ENCODE measurements at regions of chr9 and their contacts with region 1.

Region 1: GRCh38 chr9:37592108-37592951 is at the start of gene TOMM5:
- DNase-seq: peak; percentile 73 to 96 (median 91)
- ATAC-seq: peak; percentile 95
- H3K4me3 ChIP-seq: peak within 1 kb of the TSS; percentile 96 to 98
- H3K4me3 Mint-ChIP-seq: peak within 1 kb of the TSS; percentile 99
- H3K27ac ChIP-seq: peak within 1 kb of the TSS; percentile 79 to 80
- H3K27ac Mint-ChIP-seq: peak within 1 kb of the TSS; percentile 93
- H3K4me1 ChIP-seq: peaks cover 18% of the 10 kb centered on the region
- H3K4me1 Mint-ChIP-seq: peaks cover 48% of the 10 kb centered on the region
- H3K27me3 ChIP-seq: no peaks in the 10 kb centered on the region
- H3K27me3 Mint-ChIP-seq: peaks cover 4% of the 10 kb centered on the region
- CTCF ChIP-seq: no peak
- total RNA-seq, gene TOMM5: 37.8 to 40.1 TPM

Region 2: DNA sequence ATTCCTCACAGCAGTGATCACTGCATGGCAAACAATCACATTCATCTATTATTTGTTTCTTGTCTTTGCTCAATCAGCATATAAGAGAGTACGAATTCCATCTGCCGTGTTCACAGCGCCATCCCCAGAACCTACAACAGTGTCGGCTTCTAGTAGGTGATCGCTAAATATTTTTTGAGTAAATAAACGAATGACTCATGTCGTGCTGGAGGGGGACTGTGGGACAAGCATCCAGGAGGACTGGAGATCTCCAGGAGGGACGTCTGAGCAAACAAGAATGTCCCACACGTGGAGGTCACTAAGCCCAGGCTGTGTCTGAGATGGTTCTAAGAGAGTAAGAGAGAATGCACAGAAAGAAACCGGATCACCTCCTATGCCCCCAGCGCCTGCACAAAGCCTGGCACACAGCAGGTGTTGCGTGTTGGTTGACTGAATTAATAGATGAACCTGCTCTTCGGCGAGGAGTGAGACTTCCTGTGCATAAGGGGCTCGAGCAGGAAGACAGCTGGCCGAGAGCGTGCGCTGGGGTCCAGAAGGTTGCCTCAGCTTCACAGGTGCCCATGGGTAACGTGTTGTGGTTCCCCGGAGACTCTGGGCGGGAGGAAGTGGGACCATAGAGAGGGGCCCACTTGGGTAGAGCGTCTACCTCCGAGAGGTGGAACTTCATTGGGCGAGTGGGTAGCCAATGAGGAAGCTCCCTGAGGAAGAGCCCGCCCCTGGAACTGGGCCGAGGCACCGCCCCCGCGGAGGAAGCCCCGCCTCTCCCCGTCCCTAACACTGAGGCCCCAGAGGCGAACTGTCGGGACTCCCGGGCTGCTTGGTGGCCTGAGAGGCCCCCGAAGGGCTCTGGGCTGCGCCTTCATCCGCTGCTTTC is 826.6 kb before region 1 on chr9:
- CTCF ChIA-PET with region 1: no interaction called
- POLR2A ChIA-PET with region 1: no interaction called
- intact Hi-C with region 1: loop called (anchors 2 to 10 kb)
- DNase-seq: peak; percentile 68 to 95 (median 89)
- ATAC-seq: peak; percentile 99
- H3K4me3 ChIP-seq: peak overlapping the region; percentile 47 to 54
- H3K4me3 Mint-ChIP-seq: no peak overlapping the region
- H3K27ac ChIP-seq: peak overlapping the region; percentile 23 to 39
- H3K27ac Mint-ChIP-seq: peak overlapping the region; percentile 71
- H3K4me1 ChIP-seq: peaks cover 6% of the 10 kb centered on the region
- H3K4me1 Mint-ChIP-seq: peaks cover 6% of the 10 kb centered on the region
- H3K27me3 ChIP-seq: peaks cover 0 to 7% of the 10 kb centered on the region in 2 experiments
- H3K27me3 Mint-ChIP-seq: peaks cover 5% of the 10 kb centered on the region
- CTCF ChIP-seq: no peak

Region 3: GRCh38 chr9:37415011-37415719 is 177.2 kb before region 1 on chr9:
- CTCF ChIA-PET with region 1: interaction called, 8 read pairs
- POLR2A ChIA-PET with region 1: no interaction called
- intact Hi-C with region 1: loop called (anchors 1 to 5 kb)
- DNase-seq: peak; percentile 58 to 83 (median 75)
- ATAC-seq: peak; percentile 98
- H3K4me3 ChIP-seq: no peak overlapping the region
- H3K4me3 Mint-ChIP-seq: peak overlapping the region; percentile 69
- H3K27ac ChIP-seq: no peak overlapping the region
- H3K27ac Mint-ChIP-seq: peak overlapping the region; percentile 33
- H3K4me1 ChIP-seq: peaks cover 8% of the 10 kb centered on the region
- H3K4me1 Mint-ChIP-seq: peaks cover 7% of the 10 kb centered on the region
- H3K27me3 ChIP-seq: no peaks in the 10 kb centered on the region
- H3K27me3 Mint-ChIP-seq: no peaks in the 10 kb centered on the region
- CTCF ChIP-seq: peak; percentile 89

Region 4: GRCh38 chr9:37485389-37486219 is 106.7 kb before region 1 on chr9 and contains the start of gene POLR1E:
- CTCF ChIA-PET with region 1: interaction called, 6 read pairs
- POLR2A ChIA-PET with region 1: interaction called, 14 read pairs
- intact Hi-C with region 1: loop called (anchors 1 to 2 kb)
- DNase-seq: peak; percentile 90 to 98 (median 96)
- ATAC-seq: peak; percentile 97
- H3K4me3 ChIP-seq: peak within 1 kb of the TSS; percentile 73 to 81
- H3K4me3 Mint-ChIP-seq: peak within 1 kb of the TSS; percentile 95
- H3K27ac ChIP-seq: peak within 1 kb of the TSS; percentile 72 to 80
- H3K27ac Mint-ChIP-seq: peak within 1 kb of the TSS; percentile 95
- H3K4me1 ChIP-seq: peaks cover 26% of the 10 kb centered on the region
- H3K4me1 Mint-ChIP-seq: peaks cover 45% of the 10 kb centered on the region
- H3K27me3 ChIP-seq: peaks cover 0 to 4% of the 10 kb centered on the region in 2 experiments
- H3K27me3 Mint-ChIP-seq: peaks cover 7% of the 10 kb centered on the region
- CTCF ChIP-seq: no peak
- total RNA-seq, gene POLR1E: 27.2 to 27.8 TPM

Region 5: DNA sequence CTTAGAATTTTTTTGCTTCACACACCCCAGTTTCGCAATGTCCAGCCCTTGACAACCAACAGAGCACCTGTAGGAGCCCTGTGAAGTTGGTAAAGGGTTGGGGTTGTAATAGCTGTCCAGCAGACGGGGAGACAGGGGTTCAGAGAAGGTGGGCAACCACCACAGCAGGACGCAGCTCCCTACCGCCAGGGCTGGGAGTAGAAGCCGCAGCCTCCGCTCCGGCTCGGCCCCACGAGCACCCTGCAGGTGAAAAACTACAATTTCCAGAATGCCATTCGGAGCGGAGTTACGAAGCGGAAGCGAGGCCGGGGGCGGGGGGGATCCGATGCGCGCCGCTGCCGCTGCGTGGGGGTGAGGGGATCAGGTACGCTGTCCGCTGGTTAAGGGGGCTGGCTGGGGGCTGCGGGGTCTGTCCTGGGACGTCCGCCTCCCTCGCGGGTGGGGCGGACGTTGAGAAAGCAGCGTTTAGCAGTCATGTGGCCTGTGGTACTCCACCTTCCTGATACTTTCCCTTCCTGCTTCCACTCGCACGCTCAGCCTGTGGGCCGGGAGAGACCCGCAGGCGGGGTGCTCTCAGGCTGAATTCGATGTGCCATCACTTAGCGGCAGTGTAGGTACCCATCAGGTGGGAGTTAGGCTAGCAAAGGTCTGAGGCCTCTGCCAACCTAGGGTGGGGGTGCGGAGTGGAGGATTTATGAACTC is 161.3 kb after region 1 on chr9 and contains the start of gene TRMT10B:
- CTCF ChIA-PET with region 1: no interaction called
- POLR2A ChIA-PET with region 1: no interaction called
- intact Hi-C with region 1: loop called (anchors 5 kb)
- DNase-seq: peak; percentile 32 to 85 (median 69)
- ATAC-seq: peak; percentile 95
- H3K4me3 ChIP-seq: peak within 1 kb of the TSS; percentile 88 to 98
- H3K4me3 Mint-ChIP-seq: peak within 1 kb of the TSS; percentile 97
- H3K27ac ChIP-seq: peak within 1 kb of the TSS; percentile 74 to 92
- H3K27ac Mint-ChIP-seq: peak within 1 kb of the TSS; percentile 95
- H3K4me1 ChIP-seq: peaks cover 13% of the 10 kb centered on the region
- H3K4me1 Mint-ChIP-seq: peaks cover 35% of the 10 kb centered on the region
- H3K27me3 ChIP-seq: no peaks in the 10 kb centered on the region
- H3K27me3 Mint-ChIP-seq: no peaks in the 10 kb centered on the region
- CTCF ChIP-seq: no peak
- total RNA-seq, gene TRMT10B: 5.9 to 7.0 TPM

Region 6: GRCh38 chr9:38074441-38074961 is 482.2 kb after region 1 on chr9:
- CTCF ChIA-PET with region 1: no interaction called
- POLR2A ChIA-PET with region 1: no interaction called
- intact Hi-C with region 1: loop called (anchors 5 to 10 kb)
- DNase-seq: no peak
- ATAC-seq: no peak
- H3K4me3 ChIP-seq: no peak overlapping the region
- H3K4me3 Mint-ChIP-seq: no peak overlapping the region
- H3K27ac ChIP-seq: no peak overlapping the region
- H3K27ac Mint-ChIP-seq: no peak overlapping the region
- H3K4me1 ChIP-seq: peaks cover 13% of the 10 kb centered on the region
- H3K4me1 Mint-ChIP-seq: peaks cover 16% of the 10 kb centered on the region
- H3K27me3 ChIP-seq: no peaks in the 10 kb centered on the region
- H3K27me3 Mint-ChIP-seq: peaks cover 11% of the 10 kb centered on the region
- CTCF ChIP-seq: no peak

Measured in CD8-positive, alpha-beta T cell (primary cell).